ENCODE measurements at regions of chr5 and their contacts with region 1.

Region 1: GRCh38 chr5:43874772-43875171 is 271.8 kb downstream of the NNT start:
- DNase-seq: no peak
- H3K4me3 ChIP-seq: no peak overlapping the region
- H3K27ac ChIP-seq: no peak overlapping the region
- H3K4me1 ChIP-seq: no peaks in the 10 kb centered on the region
- H3K27me3 ChIP-seq: no peaks in the 10 kb centered on the region
- CTCF ChIP-seq: no peak
- EP300 ChIP-seq: no peak
- POLR2A ChIP-seq: no peak

Region 2: DNA sequence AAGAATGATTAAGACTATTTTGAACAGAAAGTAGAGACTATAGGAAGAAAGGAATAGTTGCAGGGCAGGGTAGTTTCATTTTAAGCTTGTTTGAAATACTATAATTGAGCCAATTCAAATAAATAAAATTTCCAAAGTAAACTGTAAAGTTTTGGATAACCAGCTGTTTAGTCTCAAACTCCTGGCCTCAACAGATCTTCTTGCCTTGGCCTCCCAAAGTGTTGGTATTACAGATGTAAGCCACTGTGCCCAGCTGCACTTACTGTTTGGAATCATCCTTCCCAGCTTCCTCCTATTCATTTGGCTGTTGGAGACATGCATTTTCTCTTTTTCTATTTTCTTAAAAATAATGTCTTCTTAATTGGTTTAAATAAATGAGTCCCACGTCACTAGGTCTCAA is 40.8 kb before region 1 on chr5:
- intact Hi-C with region 1: loop called (anchors 5 kb)
- DNase-seq: no peak
- H3K4me3 ChIP-seq: no peak overlapping the region
- H3K27ac ChIP-seq: no peak overlapping the region
- H3K4me1 ChIP-seq: no peaks in the 10 kb centered on the region
- H3K27me3 ChIP-seq: no peaks in the 10 kb centered on the region
- CTCF ChIP-seq: no peak
- EP300 ChIP-seq: no peak
- POLR2A ChIP-seq: no peak